Ascending aorta (tissue), 2 donors: ENCODE measurements at regions of chr20 and their contacts with region 1.

Region 1: GRCh38 chr20:57514273-57514751 is 10.6 kb downstream of the CTCFL start:
- DNase-seq: peak in 1 of 2 donors; percentile 83
- H3K4me3 ChIP-seq: no peak overlapping the region
- H3K27ac ChIP-seq: no peak overlapping the region
- H3K4me1 ChIP-seq: no peaks in the 10 kb centered on the region
- H3K27me3 ChIP-seq: no peaks in the 10 kb centered on the region
- CTCF ChIP-seq: peak; percentile 63 to 84 (median 81)

Region 2: GRCh38 chr20:57369596-57370325 is 144.6 kb before region 1 on chr20:
- intact Hi-C with region 1: no loop called
- DNase-seq: no peak
- H3K4me3 ChIP-seq: no peak overlapping the region
- H3K27ac ChIP-seq: no peak overlapping the region
- H3K4me1 ChIP-seq: no peaks in the 10 kb centered on the region
- H3K27me3 ChIP-seq: no peaks in the 10 kb centered on the region
- CTCF ChIP-seq: no peak

Region 3: DNA sequence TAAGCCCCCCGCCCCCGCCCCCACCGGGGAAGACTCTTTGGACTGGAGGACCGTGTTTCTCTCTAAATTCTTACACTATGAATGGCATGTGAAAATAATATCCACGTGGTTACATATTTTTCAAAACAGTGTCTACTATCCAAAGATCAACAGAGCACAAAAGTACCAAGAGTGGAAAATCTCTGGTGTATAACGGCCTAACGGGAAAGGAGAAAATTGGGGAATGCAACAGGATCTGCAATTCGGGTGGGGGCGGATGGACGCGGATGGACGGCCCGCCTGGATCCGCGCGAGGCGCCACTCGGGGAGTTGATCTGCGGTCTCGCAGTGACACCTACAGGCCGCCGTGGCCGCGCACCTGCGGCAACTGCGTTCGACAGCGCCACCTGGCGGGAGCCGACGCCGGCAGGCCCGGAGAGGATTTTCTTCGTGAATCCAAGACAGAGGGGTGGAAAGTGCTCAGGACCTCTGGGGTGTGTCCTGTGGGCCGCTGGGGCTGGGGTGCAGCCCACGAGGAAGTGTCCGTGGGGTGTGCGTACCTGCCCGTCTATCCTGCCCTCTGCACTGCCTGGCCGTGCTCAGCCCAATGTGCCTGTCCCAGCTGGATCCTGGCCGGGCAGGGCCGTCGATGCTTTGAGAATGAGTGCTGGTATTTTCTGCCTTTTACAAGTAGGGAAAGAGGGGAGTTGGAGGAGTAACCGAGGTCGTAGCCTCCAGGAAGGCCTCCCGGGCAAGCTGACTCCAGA is 695.5 kb after region 1 on chr20:
- intact Hi-C with region 1: loop called (anchors 1 kb)
- DNase-seq: peak in 1 of 2 donors; percentile 88
- H3K4me3 ChIP-seq: no peak overlapping the region
- H3K27ac ChIP-seq: no peak overlapping the region
- H3K4me1 ChIP-seq: no peaks in the 10 kb centered on the region
- H3K27me3 ChIP-seq: no peaks in the 10 kb centered on the region
- CTCF ChIP-seq: peak; percentile 100